GM10248 (cell line): ENCODE measurements at regions of chr19 and their contacts with region 1.

Region 1: DNA sequence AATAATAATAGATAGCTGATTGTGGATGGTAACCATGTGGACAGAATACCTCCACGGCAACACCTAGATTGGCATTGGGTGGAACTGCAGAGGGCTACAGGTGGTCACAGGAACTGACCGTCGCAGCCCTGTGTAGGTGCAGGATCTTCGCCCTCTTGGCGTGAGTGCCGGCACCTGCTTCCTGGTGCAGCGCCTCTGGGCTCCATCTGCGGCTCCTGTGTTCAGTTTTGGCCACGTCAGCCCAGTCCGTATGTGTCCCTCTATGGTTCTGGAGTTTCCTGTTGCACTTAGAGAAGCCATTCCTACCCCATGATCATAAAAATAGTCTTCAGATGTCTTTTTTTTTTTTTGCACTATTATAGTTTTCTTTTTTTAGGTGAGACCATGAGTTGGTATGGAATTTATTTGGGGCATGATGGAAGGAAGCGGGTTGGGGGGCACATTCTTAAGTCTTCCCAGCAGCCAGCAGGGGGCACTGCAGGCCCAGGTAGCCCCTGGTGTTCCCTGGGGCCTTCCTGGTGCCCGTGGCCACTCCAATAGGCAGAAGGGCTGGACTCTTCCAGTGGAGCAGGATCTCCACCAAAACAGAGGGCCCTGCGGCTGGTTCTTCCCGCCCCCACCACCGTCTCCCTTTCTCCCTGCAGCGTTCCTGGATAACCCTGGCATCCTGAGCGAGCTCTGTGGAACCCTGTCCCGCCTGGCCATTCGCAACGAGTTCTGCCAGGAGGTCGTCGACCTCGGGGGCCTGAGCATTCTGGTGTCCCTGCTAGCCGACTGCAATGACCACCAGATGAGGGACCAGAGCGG is 10.1 kb upstream of the SLC25A42 start:
- DNase-seq: peak; percentile 71
- CTCF ChIP-seq: peak; percentile 51

Region 2: DNA sequence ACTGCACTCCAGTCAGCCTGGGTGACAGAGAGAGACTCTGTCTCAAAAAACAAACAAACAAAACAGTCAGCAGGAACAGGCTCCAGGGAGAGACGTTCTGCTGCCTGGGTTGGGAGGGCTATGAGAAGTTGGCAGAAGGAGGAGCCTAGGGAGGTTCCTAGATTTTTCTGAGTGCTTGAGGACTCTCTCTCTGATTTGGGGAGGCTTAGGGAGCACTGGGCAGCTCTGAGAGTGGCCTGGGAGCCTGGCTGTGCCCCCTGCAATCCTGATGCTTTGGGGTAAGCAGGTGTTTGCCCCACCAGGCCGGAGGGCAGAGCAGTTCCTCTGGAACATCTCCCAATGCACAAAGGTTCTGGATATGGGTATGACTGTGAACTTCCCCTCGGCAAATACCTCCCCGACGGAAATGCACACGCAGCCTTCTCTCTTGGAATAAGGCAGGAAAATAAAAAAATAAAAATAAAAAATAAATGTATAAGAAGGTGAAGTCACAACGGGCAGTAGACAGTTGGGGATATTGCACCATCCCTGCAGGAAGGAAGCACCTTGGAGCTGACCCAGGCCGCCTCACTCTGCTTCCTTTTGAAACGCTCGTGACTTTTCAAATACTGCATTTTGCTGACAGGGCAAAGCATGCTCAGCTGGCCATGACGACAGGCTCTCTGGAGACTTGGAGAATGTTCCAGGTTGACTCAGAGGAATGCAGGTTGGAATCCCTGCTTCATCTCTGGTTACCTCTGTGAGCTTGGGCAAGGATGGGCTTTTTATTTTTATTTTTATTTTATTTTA is 86.2 kb before region 1 on chr19:
- CTCF ChIA-PET with region 1: no interaction called
- POLR2A ChIA-PET with region 1: no interaction called
- DNase-seq: no peak
- CTCF ChIP-seq: no peak

Region 3: DNA sequence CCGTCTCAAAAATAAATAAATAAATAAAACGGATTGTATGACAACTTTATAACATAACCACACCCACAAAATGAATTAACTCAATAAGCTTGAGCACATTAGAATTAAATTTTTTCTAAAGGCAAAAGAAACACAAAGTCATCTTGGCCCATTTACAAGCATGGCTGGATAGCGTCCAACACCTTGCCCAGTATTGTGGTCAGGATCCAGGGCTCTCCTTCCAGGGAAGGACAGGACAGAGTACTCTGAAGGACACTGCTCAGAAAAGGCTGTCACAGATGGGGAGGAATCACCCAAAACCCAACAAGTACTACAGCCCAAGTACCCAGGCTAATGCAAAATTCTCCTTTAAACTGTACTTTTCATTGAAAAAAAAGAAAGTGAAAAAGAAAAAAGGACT is 47.5 kb before region 1 on chr19:
- CTCF ChIA-PET with region 1: no interaction called
- POLR2A ChIA-PET with region 1: no interaction called
- DNase-seq: no peak
- CTCF ChIP-seq: no peak

Region 4: DNA sequence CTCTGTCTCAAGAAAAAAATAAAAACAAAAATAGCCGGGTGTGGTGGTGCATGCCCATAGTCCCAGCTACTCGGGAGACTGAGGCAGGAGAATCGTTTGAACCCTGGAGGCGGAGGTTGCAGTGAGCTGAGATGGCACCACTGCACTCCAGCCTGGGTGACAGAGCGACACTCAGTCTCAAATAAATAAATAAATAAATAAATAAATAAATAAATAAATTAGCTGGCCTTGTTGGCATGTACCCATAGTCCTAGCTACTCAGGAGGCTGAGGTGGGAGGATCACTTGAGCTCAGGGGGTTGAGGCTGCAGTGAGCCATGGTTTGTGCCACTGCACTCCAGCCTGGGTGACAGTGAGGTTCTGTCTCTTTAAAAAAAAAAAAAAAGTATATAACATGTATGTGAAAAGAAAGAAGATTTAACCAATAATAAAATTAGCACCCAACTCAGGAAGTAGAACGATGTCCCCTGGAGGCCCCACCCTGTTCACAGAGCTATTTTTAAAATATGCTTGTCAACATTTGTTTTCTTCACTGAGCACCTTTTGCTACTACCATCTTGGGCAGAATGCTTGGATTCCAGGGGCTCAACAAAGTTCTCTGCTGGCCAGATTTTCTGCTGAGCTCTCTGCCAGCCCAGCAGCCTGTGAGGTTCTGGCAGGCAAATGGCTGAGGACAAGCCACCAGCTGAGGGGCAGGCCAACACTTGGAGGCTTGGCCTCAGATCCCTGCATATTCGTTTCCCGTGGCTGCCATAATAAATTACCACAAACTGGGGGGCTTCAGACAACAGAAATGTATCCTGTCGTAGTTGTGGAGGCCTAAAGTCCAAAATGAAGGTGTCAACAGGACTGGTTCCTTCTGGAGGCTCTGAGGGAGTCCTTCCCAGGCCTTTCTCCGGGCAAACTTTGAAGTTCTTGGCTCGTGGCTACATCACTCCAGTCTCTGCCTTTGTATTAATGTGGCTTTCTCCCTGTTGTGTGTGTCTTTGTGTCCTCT is 15.2 kb after region 1 on chr19:
- CTCF ChIA-PET with region 1: interaction called, 23 read pairs
- POLR2A ChIA-PET with region 1: no interaction called
- DNase-seq: peak; percentile 44
- CTCF ChIP-seq: no peak

Region 5: GRCh38 chr19:19109601-19110000 is 55.9 kb after region 1 on chr19:
- CTCF ChIA-PET with region 1: no interaction called
- POLR2A ChIA-PET with region 1: no interaction called
- DNase-seq: no peak
- CTCF ChIP-seq: no peak